ENCODE measurements at regions of chr16 and their contacts with region 1.

Region 1: GRCh38 chr16:21971856-21972255 is 18.7 kb downstream of the UQCRC2 start:
- DNase-seq: no peak
- H3K4me3 ChIP-seq: no peak overlapping the region
- H3K27ac ChIP-seq: no peak overlapping the region
- H3K27me3 ChIP-seq: no peaks in the 10 kb centered on the region
- CTCF ChIP-seq: no peak

Region 2: GRCh38 chr16:21989133-21989532 is 17.3 kb after region 1 on chr16:
- CTCF ChIA-PET with region 1: interaction called, 10 read pairs
- POLR2A ChIA-PET with region 1: interaction called, 3 read pairs
- DNase-seq: no peak
- H3K4me3 ChIP-seq: no peak overlapping the region
- H3K27ac ChIP-seq: no peak overlapping the region
- H3K27me3 ChIP-seq: no peaks in the 10 kb centered on the region
- CTCF ChIP-seq: no peak

Region 3: GRCh38 chr16:22091758-22092600 is 120.1 kb after region 1 on chr16 and contains the start of gene VWA3A:
- CTCF ChIA-PET with region 1: no interaction called
- POLR2A ChIA-PET with region 1: no interaction called
- DNase-seq: peak; percentile 27
- H3K4me3 ChIP-seq: no peak within 1 kb of the TSS
- H3K27ac ChIP-seq: peak within 1 kb of the TSS; percentile 61
- H3K27me3 ChIP-seq: peaks cover 6% of the 10 kb centered on the region
- CTCF ChIP-seq: no peak
- polyA plus RNA-seq, gene VWA3A: not detected in 2 replicates

Measured in AG04450 (cell line).